ENCODE measurements at regions of chr9 and their contacts with region 1.

Region 1: DNA sequence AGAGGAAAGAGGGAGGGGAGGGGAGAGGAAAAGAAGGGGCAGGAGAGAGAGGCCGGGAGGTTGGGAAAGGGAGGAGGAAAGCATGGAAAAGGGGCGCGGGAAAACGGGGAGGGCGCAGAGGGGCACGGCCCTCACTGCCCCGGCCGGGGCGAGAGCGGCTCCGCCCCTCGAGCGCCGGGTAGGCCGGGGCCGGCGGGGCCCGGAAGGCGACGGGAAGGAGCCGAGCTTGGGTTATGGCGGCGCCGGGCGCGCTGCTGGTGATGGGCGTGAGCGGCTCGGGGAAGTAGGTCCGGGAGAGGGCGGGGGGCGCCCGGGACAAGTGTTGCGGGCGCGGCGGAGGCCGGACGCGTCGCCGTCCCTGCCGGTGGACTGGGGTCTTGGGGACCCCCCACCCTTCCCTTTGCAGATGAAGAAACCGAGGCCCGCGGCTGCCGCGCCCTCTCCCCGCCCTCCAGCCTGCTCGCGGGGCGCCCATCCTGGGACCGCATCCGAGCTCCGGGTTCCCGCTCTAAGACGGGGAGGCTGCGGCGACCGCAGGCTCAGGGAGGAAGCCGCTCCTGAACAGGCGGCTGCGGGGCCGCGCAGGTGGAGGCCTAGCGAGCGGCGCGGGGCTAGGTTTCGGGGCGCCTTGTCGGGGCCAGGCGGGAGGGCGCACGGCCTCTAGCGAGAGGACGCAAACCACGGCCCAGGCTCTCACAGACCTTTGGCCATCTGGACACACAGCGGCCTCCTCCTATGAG is at the start of gene IDNK:
- DNase-seq: peak; percentile 82
- CTCF ChIP-seq: no peak

Region 2: DNA sequence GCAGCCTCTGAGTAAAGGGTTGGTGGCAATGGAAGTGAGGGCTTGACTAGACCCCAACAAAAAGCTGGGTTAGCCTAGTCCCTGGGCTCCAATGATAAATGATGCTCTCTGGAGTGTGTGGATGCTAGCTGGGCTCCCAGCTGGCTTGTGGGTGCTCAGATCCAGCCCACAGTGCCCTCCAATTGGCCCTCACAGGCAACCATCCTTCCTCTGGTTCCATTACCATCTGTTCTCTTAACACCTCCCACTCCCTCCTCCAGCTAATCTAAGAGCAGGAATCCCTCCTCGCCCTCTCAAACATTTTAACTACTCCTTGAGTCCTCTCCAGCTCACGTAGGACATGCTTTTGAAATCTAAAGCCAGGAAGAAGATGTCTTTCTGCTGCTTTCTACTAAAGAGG is 59.7 kb before region 1 on chr9:
- CTCF ChIA-PET with region 1: no interaction called
- POLR2A ChIA-PET with region 1: no interaction called
- DNase-seq: no peak
- CTCF ChIP-seq: no peak

Region 3: GRCh38 chr9:83636813-83637212 is 13.7 kb after region 1 on chr9:
- CTCF ChIA-PET with region 1: interaction called, 24 read pairs
- POLR2A ChIA-PET with region 1: no interaction called
- DNase-seq: no peak
- CTCF ChIP-seq: no peak

Measured in GM10248 (cell line).